Gastrocnemius medialis (tissue), 4 donors: ENCODE measurements at regions of chr6 and their contacts with region 1.

Region 1: DNA sequence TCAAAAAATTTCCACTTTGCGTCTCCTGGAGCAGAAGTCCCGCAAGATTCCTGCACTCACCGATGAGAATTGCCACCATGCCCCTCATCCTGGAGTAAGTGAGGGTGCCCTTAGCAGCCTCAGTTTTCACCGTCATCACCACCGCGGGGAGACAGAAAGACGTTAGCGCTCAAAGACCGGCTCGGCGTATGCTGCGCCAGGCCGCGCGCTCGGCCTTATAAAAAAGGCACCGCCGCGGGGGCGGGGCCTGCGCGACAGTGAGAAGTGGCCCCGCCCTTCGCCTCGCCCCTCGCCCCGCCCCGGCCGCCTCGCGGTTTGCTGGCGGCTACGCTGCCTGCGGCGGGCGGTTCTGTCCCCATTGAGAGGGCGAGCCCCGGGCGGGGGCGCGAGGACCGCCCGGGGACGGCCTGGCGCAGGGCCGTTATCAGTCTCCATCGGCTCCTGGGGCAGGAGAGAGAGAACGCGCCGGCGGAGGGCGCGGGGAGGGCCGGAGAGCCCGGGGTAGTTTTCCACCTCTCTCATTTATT is 122.3 kb upstream of the SLC2A12 start:
- DNase-seq: peak; percentile 84 to 89
- ATAC-seq: peak; percentile 41 to 48
- H3K4me3 ChIP-seq: peak overlapping the region; percentile 71 to 94 (median 86)
- H3K27ac ChIP-seq: peak overlapping the region; percentile 92 to 98 (median 96)
- H3K4me1 ChIP-seq: peaks cover 38 to 52% of the 10 kb centered on the region in 2 donors
- H3K27me3 ChIP-seq: no peaks in the 10 kb centered on the region
- CTCF ChIP-seq: peak in 1 of 5 experiments; percentile 5
- POLR2A ChIP-seq: peak; percentile 98 to 99

Region 2: DNA sequence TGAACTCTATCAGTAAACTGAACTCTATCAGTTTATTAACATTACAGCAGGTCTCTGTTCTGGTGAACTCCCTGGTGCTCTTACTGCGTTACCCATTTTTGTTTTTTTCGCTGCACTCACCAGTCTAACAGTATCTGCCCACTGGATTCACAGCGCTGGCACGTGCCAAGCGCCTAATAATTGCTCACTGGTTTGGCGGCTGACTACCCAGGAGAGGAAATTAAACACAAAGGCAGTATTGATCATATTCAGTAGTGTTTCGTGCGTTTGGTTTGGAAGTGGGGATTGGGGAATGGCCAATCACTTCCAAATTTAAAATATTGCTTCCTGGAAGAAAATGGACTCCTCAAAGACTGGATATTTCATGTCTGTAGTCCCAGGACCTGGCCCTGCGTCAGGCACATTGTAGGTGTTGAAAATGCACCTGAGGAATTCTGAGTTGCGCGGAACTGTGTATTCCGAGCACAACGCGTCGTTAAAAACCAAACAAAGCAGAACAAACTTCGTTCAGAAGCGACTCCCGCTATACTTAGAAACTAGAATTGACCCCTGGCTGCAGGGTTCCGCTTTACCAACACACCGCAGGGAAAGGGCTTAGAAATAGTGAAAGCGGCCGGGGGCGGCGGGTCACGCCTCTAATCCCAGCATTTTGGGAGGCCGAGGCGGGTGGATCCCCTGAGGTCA is 1361.4 kb before region 1 on chr6:
- in situ Hi-C with region 1: no loop called
- intact Hi-C with region 1: loop called (anchors 10 kb)
- DNase-seq: peak in 1 of 2 donors; percentile 46
- ATAC-seq: peak; percentile 22 to 23
- H3K4me3 ChIP-seq: peak overlapping the region; percentile 64 to 99 (median 90)
- H3K27ac ChIP-seq: peak overlapping the region; percentile 85 to 96 (median 88)
- H3K4me1 ChIP-seq: peaks cover 24 to 32% of the 10 kb centered on the region in 2 donors
- H3K27me3 ChIP-seq: no peaks in the 10 kb centered on the region
- CTCF ChIP-seq: peak in 1 of 5 experiments; percentile 11
- POLR2A ChIP-seq: no peak

Region 3: GRCh38 chr6:134111062-134111677 is 63.6 kb before region 1 on chr6:
- in situ Hi-C with region 1: no loop called
- intact Hi-C with region 1: no loop called
- DNase-seq: no peak
- ATAC-seq: peak in 1 of 2 donors; percentile 62
- H3K4me3 ChIP-seq: no peak overlapping the region
- H3K27ac ChIP-seq: no peak overlapping the region
- H3K4me1 ChIP-seq: no peaks in the 10 kb centered on the region
- H3K27me3 ChIP-seq: no peaks in the 10 kb centered on the region
- CTCF ChIP-seq: peak in 4 of 5 experiments; percentile 41 to 70 (median 55)
- POLR2A ChIP-seq: no peak

Region 4: GRCh38 chr6:134347916-134348805 is 173.4 kb after region 1 on chr6:
- in situ Hi-C with region 1: no loop called
- intact Hi-C with region 1: loop called (anchors 1 kb)
- DNase-seq: peak; percentile 45 to 60
- ATAC-seq: peak; percentile 50 to 56
- H3K4me3 ChIP-seq: peak overlapping the region; percentile 4 to 43 (median 30)
- H3K27ac ChIP-seq: peak overlapping the region; percentile 75 to 89 (median 85)
- H3K4me1 ChIP-seq: peaks cover 30 to 57% of the 10 kb centered on the region in 2 donors
- H3K27me3 ChIP-seq: no peaks in the 10 kb centered on the region
- CTCF ChIP-seq: no peak
- POLR2A ChIP-seq: peak in 1 of 2 donors; percentile 43

Region 5: GRCh38 chr6:134480593-134480992 is 305.9 kb after region 1 on chr6:
- in situ Hi-C with region 1: no loop called
- intact Hi-C with region 1: loop called (anchors 5 kb)
- DNase-seq: peak; percentile 52 to 67
- ATAC-seq: peak; percentile 86 to 91
- H3K4me3 ChIP-seq: no peak overlapping the region
- H3K27ac ChIP-seq: peak overlapping the region in 3 of 4 donors; percentile 57 to 75 (median 65)
- H3K4me1 ChIP-seq: peaks cover 32 to 34% of the 10 kb centered on the region in 2 donors
- H3K27me3 ChIP-seq: no peaks in the 10 kb centered on the region
- CTCF ChIP-seq: no peak
- POLR2A ChIP-seq: no peak

Region 6: DNA sequence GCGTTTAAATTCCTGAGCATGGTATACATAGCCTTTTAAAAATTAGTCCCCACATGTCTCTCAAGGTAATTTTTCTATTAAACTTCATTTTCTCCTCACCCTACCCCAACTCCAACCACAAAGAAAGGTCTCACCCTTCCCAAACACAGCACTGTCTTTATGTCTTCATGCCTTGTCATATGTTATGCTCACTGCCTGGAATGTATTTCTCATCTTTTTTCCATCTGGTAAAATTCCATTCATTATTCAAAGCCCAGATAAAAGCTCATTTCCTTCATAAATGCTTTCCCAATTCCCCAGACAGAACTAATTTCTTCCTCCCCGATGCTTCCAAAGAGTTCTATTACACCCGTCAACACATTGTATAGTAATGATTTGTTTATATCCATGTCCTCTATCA is 473.1 kb after region 1 on chr6:
- in situ Hi-C with region 1: loop called in 3 of 4 experiments (anchors 5 to 10 kb)
- intact Hi-C with region 1: no loop called
- DNase-seq: no peak
- ATAC-seq: no peak
- H3K4me3 ChIP-seq: no peak overlapping the region
- H3K27ac ChIP-seq: no peak overlapping the region
- H3K4me1 ChIP-seq: no peaks in the 10 kb centered on the region
- H3K27me3 ChIP-seq: no peaks in the 10 kb centered on the region
- CTCF ChIP-seq: no peak
- POLR2A ChIP-seq: no peak

Region 7: DNA sequence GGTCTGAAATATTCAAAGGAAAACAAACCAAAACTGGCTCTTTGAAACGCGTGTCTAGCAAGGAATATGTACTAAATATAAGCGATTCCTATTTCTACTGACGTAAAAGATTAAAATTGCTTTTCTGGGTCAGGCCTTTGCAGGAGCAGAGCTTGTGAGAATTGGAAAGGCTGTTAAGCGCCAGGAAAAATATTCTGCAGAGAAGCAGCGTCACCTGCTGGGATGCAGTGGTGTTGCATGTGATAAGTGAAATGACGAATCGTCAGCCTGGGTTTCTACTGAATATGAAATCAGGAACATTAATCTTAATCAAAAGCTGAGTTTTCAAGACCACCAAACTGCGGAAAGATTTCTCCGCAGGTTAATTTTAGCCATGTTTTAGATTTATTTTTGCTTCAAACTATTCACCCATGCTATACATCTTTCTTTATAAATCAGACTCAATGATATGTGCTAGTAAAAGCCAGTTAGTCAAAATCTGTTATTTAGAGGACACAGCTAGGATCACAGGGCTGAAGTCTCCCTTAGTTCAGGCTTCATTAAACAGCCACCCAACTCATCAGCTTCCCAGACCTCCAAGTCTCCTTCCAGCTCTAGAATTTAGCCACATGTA is 707.8 kb after region 1 on chr6:
- in situ Hi-C with region 1: loop called in 2 of 4 experiments (anchors 5 to 25 kb)
- intact Hi-C with region 1: loop called (anchors 5 kb)
- DNase-seq: peak; percentile 31 to 67
- ATAC-seq: peak; percentile 80 to 90
- H3K4me3 ChIP-seq: no peak overlapping the region
- H3K27ac ChIP-seq: no peak overlapping the region
- H3K4me1 ChIP-seq: peaks cover 0 to 3% of the 10 kb centered on the region in 2 donors
- H3K27me3 ChIP-seq: no peaks in the 10 kb centered on the region
- CTCF ChIP-seq: peak; percentile 75 to 95 (median 92)
- POLR2A ChIP-seq: no peak

Region 8: DNA sequence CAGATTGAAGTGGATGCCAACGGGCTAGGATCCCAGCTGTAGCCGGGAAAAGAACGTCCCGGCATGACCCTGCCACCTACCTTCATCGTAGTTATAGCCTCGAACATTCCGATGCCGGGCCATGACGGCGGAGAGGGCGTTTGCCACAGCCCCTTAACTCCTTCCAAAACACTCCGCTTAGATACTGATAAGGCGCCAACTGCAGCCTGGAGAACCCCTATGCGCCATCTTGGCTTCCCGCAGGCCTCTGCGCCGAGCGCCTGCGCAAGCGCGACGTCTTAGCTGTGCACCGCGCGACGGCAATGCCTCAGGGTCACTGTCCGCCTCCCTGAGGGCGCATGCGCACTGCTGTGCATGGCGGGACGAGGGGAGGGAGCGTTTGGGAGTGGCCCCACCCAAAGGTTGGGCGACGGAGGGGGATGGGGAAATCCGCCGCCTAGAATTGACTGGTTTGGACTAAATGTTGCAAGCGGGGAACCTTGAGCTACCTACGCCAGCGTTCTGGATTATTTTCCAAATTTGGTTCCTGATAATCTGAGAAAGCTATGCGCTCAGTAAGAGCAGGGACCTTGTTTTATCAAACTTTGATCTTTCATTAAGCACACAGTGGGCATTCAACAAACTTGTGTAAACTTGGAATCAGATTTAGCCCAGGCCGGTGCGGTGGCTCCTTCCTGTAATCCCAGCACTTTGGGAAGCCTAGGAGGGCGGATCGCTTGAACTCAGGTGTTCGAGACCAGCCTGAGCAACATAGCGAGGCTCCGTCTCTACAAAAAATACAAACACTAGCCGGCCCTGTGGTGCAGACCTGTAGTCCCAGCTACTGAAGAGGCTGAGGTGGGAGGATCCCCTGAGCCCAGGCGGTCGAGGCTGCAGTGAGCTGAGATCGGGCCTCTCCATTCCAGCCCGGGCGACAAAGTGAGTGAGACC is 880.1 kb after region 1 on chr6 and contains the start of gene HBS1L:
- in situ Hi-C with region 1: no loop called
- intact Hi-C with region 1: loop called (anchors 10 kb)
- DNase-seq: peak; percentile 92 to 96
- ATAC-seq: peak; percentile 95 to 99
- H3K4me3 ChIP-seq: peak within 1 kb of the TSS; percentile 77 to 90 (median 86)
- H3K27ac ChIP-seq: peak within 1 kb of the TSS; percentile 86 to 89 (median 88)
- H3K4me1 ChIP-seq: peaks cover 13 to 28% of the 10 kb centered on the region in 2 donors
- H3K27me3 ChIP-seq: no peaks in the 10 kb centered on the region
- CTCF ChIP-seq: no peak
- POLR2A ChIP-seq: peak; percentile 80 to 88
- total RNA-seq, gene HBS1L: 97.9 to 139 (median 120) TPM